Heart right ventricle (tissue), 16 donors: ENCODE measurements at regions of chr2 and their contacts with region 1.

Region 1: DNA sequence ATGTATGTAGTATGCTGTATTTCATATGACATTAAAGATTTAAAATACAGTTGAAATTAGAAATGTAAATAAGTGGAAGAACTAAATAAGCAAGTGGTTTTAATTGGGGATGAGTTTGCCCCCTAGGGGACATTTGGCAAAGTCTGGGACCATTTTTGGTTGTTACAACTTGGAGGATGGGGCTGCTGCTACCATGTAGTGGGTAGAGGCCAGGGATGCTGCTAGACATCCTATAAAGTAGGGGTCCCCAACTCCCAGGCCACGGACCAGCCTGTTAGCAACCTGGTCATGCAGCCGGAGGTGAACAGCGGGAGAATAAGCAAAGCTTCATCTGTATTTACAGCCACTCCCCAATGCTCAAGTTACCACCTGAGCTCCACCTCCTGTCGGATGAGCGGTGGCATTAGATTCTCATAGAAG is 27.9 kb upstream of the ASNSD1 start:
- DNase-seq: peak in 1 of 2 donors; percentile 19
- ATAC-seq: peak in 2 of 8 donors; percentile 13 to 54
- H3K4me3 ChIP-seq: no peak overlapping the region
- H3K27ac ChIP-seq: no peak overlapping the region
- H3K4me1 ChIP-seq: peaks cover 0 to 8% (median 0%) of the 10 kb centered on the region in 9 donors
- H3K27me3 ChIP-seq: no peaks in the 10 kb centered on the region
- CTCF ChIP-seq: peak; percentile 10 to 65 (median 54)

Region 2: DNA sequence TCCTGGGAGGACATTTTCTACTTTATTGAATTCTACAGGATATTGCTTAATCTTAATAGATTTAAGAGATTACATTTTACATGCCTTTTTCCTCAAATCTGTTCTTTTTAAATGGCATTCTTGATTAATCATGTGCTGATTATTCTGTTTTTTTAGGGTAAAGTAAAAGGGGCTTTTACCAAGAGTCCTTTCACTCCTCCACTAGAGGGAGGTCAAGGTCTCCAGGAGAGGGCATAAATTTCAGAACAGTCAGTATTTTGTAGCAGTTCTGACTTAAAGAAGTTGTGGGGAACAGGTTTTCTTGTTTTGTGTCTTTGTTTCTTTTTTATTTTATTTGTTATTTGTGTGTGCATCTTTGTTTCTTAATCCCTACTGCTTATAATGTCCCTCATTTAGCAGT is 166.7 kb before region 1 on chr2:
- intact Hi-C with region 1: loop called in 9 of 10 experiments (anchors 2 to 10 kb)
- DNase-seq: peak in 1 of 2 donors; percentile 26
- ATAC-seq: peak in 6 of 8 donors; percentile 47 to 73 (median 67)
- H3K4me3 ChIP-seq: no peak overlapping the region
- H3K27ac ChIP-seq: no peak overlapping the region
- H3K4me1 ChIP-seq: peaks cover 0 to 19% (median 5%) of the 10 kb centered on the region in 9 donors
- H3K27me3 ChIP-seq: no peaks in the 10 kb centered on the region
- CTCF ChIP-seq: peak; percentile 33 to 81 (median 72)

Region 3: GRCh38 chr2:189696223-189696622 is 62.8 kb after region 1 on chr2:
- intact Hi-C with region 1: no loop called
- DNase-seq: no peak
- ATAC-seq: no peak
- H3K4me3 ChIP-seq: no peak overlapping the region
- H3K27ac ChIP-seq: no peak overlapping the region
- H3K4me1 ChIP-seq: peaks cover 0 to 9% (median 0%) of the 10 kb centered on the region in 9 donors
- H3K27me3 ChIP-seq: no peaks in the 10 kb centered on the region
- CTCF ChIP-seq: no peak